ENCODE measurements at regions of chr5 and their contacts with region 1.

Region 1: GRCh38 chr5:112921833-112922817 is at the start of gene REEP5:
- DNase-seq: peak; percentile 90 to 94
- ATAC-seq: peak; percentile 96
- H3K4me3 ChIP-seq: peak within 1 kb of the TSS; percentile 83 to 89
- H3K27ac ChIP-seq: peak within 1 kb of the TSS; percentile 84 to 88
- H3K4me1 ChIP-seq: no peaks in the 10 kb centered on the region
- H3K27me3 ChIP-seq: no peaks in the 10 kb centered on the region
- total RNA-seq, gene REEP5: 74.4 to 88.5 TPM

Region 2: DNA sequence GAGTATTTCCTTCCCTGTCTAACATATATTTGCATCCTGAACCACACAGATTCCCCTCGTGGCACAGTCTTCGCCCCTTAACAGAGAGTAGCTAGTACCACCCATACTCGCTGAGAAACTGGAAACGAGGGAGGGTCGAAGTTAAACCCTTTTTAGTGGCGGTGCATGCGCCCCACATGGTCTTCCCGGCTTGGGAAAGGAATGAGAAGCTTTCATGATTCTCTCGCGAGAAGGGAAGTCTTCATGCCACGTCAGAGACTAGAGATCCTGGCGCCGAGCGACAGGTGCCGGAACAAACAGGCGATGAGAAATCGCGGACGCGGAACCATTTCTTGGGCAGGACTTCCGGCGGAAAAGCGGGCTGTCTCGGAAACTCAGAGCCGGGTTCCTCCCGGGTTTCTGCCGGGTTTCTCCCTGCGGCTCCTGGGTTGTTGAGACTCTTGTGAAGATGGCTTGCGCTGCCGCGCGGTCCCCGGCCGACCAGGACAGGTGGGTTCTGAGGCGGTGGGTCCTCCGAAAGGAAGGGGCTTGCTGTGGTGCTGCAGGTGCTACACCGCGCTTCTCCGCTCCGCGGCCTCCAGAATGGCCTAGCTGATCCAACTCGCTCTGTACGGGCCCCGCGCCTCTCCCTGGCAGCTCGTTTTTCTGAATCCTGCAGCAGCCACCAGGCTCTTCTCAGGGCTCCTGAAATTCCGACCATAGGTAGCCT is 61.0 kb before region 1 on chr5 and contains the start of gene SRP19:
- intact Hi-C with region 1: loop called in 1 of 2 experiments (anchors 1 kb)
- DNase-seq: peak; percentile 97 to 98
- ATAC-seq: peak; percentile 98
- H3K4me3 ChIP-seq: peak within 1 kb of the TSS; percentile 73 to 93
- H3K27ac ChIP-seq: peak within 1 kb of the TSS in 1 of 2 donors; percentile 91
- H3K4me1 ChIP-seq: peaks cover 0 to 8% of the 10 kb centered on the region in 2 donors
- H3K27me3 ChIP-seq: no peaks in the 10 kb centered on the region
- total RNA-seq, gene SRP19: 33.4 to 40.1 TPM

Region 3: GRCh38 chr5:112958093-112959088 is 36.3 kb after region 1 on chr5:
- intact Hi-C with region 1: loop called (anchors 5 kb)
- DNase-seq: peak; percentile 81 to 86
- ATAC-seq: peak; percentile 70
- H3K4me3 ChIP-seq: no peak overlapping the region
- H3K27ac ChIP-seq: no peak overlapping the region
- H3K4me1 ChIP-seq: peaks cover 4 to 5% of the 10 kb centered on the region in 2 donors
- H3K27me3 ChIP-seq: no peaks in the 10 kb centered on the region

Region 4: GRCh38 chr5:112976432-112977309 is 54.5 kb after region 1 on chr5 and contains the start of gene DCP2:
- intact Hi-C with region 1: loop called in 1 of 2 experiments (anchors 5 kb)
- DNase-seq: peak; percentile 96 to 98
- ATAC-seq: peak; percentile 100
- H3K4me3 ChIP-seq: peak within 1 kb of the TSS; percentile 78 to 89
- H3K27ac ChIP-seq: peak within 1 kb of the TSS; percentile 19 to 73
- H3K4me1 ChIP-seq: peaks cover 0 to 2% of the 10 kb centered on the region in 2 donors
- H3K27me3 ChIP-seq: no peaks in the 10 kb centered on the region
- total RNA-seq, gene DCP2: 38.0 to 59.3 TPM

Region 5: GRCh38 chr5:113112435-113112834 is 190.3 kb after region 1 on chr5:
- intact Hi-C with region 1: no loop called
- DNase-seq: no peak
- ATAC-seq: no peak
- H3K4me3 ChIP-seq: no peak overlapping the region
- H3K27ac ChIP-seq: no peak overlapping the region
- H3K4me1 ChIP-seq: no peaks in the 10 kb centered on the region
- H3K27me3 ChIP-seq: no peaks in the 10 kb centered on the region

Measured in aorta (tissue), 5 donors.